CD4-positive, alpha-beta T cell (primary cell): ENCODE measurements at regions of chr10 and their contacts with region 1.

Region 1: DNA sequence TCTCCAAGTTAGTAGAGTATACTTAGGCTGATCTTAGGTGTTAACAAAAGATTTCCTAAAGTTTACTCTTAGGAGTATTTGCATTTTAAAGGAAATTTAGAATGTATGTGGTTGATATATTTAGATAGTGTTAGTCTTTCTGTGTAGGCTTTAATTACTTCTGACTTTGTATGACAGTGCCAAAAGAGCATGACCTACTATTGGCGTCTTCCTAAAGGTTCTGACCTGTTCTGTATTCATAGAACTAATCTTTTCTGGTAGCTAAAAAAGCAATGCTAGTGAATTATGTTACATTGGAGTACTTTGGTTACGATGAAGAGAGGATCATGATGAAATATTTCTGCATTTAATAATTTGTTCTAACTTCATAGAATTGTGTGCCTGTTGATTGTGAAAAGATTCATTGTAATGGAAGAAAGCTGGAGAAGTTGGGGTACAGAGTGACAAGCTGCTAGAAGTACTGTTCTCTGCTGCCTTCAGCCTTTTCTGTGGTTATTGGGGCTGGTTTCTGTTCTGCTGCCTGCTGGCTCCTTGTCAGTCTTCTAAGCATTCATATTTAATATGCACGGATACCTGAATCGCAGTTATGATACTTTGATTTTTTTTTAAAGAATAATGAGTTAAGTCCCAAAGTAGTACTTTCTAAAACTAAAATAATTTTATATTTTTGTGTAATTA is 13.2 kb downstream of the WAC start:
- DNase-seq: no peak
- ATAC-seq: peak; percentile 43
- H3K4me3 ChIP-seq: no peak overlapping the region
- H3K4me3 Mint-ChIP-seq: peak overlapping the region; percentile 16
- H3K27ac ChIP-seq: no peak overlapping the region
- H3K27ac Mint-ChIP-seq: peak overlapping the region; percentile 4
- H3K4me1 ChIP-seq: peaks cover 39% of the 10 kb centered on the region
- H3K4me1 Mint-ChIP-seq: peaks cover 82% of the 10 kb centered on the region
- H3K27me3 ChIP-seq: no peaks in the 10 kb centered on the region
- H3K27me3 Mint-ChIP-seq: no peaks in the 10 kb centered on the region
- CTCF ChIP-seq: no peak

Region 2: DNA sequence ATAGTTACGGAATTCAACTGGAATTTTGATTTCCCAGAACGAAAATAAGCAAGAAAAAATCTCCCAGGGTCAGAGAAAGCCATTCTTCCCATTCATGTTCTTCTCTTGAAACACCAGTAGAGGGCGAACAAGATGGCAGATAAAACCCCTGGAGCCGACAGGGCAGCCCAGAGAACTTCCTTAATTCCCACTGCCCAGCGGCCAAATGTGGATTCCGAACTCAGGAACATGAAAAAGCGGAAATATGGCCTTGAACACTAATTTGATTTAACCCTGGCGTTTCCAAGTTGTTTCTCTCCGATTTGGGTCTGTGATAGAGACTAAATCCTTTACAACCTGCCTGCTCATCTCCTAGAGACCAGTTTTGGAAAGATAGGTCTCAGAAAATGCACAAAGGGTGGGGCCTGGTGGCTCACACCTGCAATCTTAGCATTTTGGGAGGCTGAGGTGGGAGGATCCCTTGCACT is 113.9 kb before region 1 on chr10:
- CTCF ChIA-PET with region 1: interaction called, 3 read pairs
- POLR2A ChIA-PET with region 1: no interaction called
- intact Hi-C with region 1: loop called in 1 of 2 experiments (anchors 5 kb)
- DNase-seq: peak in 8 of 14 experiments; percentile 2 to 72 (median 16)
- ATAC-seq: peak; percentile 65
- H3K4me3 ChIP-seq: peak overlapping the region; percentile 15
- H3K4me3 Mint-ChIP-seq: peak overlapping the region; percentile 44
- H3K27ac ChIP-seq: no peak overlapping the region
- H3K27ac Mint-ChIP-seq: no peak overlapping the region
- H3K4me1 ChIP-seq: peaks cover 5% of the 10 kb centered on the region
- H3K4me1 Mint-ChIP-seq: peaks cover 8% of the 10 kb centered on the region
- H3K27me3 ChIP-seq: no peaks in the 10 kb centered on the region
- H3K27me3 Mint-ChIP-seq: peaks cover 4% of the 10 kb centered on the region
- CTCF ChIP-seq: peak; percentile 85

Region 3: DNA sequence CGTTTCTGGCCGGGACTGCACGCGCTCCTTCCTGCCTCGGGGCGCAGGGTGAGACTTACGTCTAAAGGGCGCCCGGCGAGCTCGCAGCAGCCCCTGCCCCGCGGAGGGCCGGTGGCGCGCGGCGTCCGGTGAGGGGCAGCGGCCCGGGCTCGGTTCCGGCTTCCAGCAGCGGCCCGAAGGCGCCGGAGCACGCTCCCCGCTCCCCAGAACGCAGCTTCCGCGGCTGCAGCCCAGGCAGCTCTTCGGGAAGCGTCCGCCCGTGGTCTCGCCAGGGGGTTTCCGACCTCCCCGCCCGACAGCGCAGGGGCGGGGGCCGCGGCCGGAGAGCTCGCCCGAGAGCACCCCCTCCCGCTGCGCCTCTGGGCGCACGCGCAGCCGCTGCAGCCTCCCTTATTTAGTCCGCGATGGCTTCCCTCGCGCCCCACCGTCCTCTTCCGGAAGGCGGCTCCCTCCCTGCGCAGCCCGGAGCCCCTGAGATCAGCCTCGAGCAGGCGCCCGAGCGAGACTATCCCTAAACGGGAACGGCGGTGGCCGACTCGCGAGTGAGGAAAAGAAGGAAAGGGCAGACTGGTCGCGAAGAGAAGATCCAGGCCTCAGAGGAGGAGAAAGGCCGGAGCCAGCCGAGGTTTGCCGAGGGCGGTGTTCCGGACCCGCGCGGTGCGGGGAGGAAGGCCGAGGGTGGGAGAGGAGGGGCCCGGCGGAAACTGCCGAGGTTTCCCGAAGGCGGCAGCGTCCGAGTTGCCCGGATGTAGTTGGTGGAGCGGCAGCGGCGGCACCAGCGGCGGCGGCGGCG is 13.5 kb before region 1 on chr10 and contains the start of gene WAC:
- CTCF ChIA-PET with region 1: no interaction called
- POLR2A ChIA-PET with region 1: interaction called, 45 read pairs
- intact Hi-C with region 1: loop called in 1 of 2 experiments (anchors 2 kb)
- DNase-seq: peak; percentile 93 to 98 (median 97)
- ATAC-seq: peak; percentile 81
- H3K4me3 ChIP-seq: peak within 1 kb of the TSS; percentile 98
- H3K4me3 Mint-ChIP-seq: peak within 1 kb of the TSS; percentile 100
- H3K27ac ChIP-seq: peak within 1 kb of the TSS; percentile 99
- H3K27ac Mint-ChIP-seq: peak within 1 kb of the TSS; percentile 98
- H3K4me1 ChIP-seq: peaks cover 22% of the 10 kb centered on the region
- H3K4me1 Mint-ChIP-seq: peaks cover 73% of the 10 kb centered on the region
- H3K27me3 ChIP-seq: no peaks in the 10 kb centered on the region
- H3K27me3 Mint-ChIP-seq: no peaks in the 10 kb centered on the region
- CTCF ChIP-seq: peak; percentile 30
- total RNA-seq, gene WAC: 169 to 177 TPM

Region 4: DNA sequence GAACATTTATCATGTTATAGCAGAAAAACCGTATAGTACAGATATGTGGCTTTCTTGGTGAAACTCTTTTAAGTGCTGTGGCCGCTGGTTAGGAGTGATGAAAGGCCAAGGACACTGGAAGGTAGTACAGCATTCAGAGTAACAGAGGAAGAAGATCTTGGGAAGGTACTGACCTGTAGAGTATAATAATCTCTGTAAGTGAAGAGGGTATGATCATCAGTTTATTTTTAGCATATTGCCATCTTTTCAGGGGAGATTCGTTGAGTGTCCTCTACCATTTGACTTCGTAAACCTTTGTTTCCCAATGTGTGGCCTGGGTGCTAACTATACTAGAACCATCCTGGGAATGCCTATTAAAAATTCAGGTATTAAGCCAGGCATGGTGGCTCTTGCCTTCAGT is 31.4 kb after region 1 on chr10:
- CTCF ChIA-PET with region 1: no interaction called
- POLR2A ChIA-PET with region 1: no interaction called
- intact Hi-C with region 1: loop called in 1 of 2 experiments (anchors 5 kb)
- DNase-seq: no peak
- ATAC-seq: no peak
- H3K4me3 ChIP-seq: no peak overlapping the region
- H3K4me3 Mint-ChIP-seq: peak overlapping the region; percentile 13
- H3K27ac ChIP-seq: no peak overlapping the region
- H3K27ac Mint-ChIP-seq: peak overlapping the region; percentile 41
- H3K4me1 ChIP-seq: peaks cover 19% of the 10 kb centered on the region
- H3K4me1 Mint-ChIP-seq: peaks cover 90% of the 10 kb centered on the region
- H3K27me3 ChIP-seq: no peaks in the 10 kb centered on the region
- H3K27me3 Mint-ChIP-seq: no peaks in the 10 kb centered on the region
- CTCF ChIP-seq: no peak

Region 5: DNA sequence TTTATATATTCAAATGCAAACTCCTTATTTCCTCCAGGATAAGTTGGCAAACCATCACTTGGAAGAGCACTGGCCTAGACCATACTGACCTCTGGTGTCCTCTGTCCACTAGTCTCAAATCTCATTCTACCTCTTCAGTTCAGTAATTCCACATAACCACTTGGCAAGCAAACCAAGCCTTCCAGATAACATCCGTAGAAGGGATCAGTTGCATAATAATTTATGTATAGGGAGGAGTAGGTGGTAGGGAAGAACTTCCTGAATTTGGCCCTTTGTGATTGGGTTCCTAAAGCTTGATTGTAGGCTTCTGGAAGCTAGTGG is 41.8 kb after region 1 on chr10:
- CTCF ChIA-PET with region 1: interaction called, 10 read pairs
- POLR2A ChIA-PET with region 1: no interaction called
- intact Hi-C with region 1: loop called in 1 of 2 experiments (anchors 5 kb)
- DNase-seq: no peak
- ATAC-seq: no peak
- H3K4me3 ChIP-seq: no peak overlapping the region
- H3K4me3 Mint-ChIP-seq: no peak overlapping the region
- H3K27ac ChIP-seq: no peak overlapping the region
- H3K27ac Mint-ChIP-seq: peak overlapping the region; percentile 68
- H3K4me1 ChIP-seq: peaks cover 3% of the 10 kb centered on the region
- H3K4me1 Mint-ChIP-seq: peaks cover 72% of the 10 kb centered on the region
- H3K27me3 ChIP-seq: no peaks in the 10 kb centered on the region
- H3K27me3 Mint-ChIP-seq: no peaks in the 10 kb centered on the region
- CTCF ChIP-seq: no peak

Region 6: DNA sequence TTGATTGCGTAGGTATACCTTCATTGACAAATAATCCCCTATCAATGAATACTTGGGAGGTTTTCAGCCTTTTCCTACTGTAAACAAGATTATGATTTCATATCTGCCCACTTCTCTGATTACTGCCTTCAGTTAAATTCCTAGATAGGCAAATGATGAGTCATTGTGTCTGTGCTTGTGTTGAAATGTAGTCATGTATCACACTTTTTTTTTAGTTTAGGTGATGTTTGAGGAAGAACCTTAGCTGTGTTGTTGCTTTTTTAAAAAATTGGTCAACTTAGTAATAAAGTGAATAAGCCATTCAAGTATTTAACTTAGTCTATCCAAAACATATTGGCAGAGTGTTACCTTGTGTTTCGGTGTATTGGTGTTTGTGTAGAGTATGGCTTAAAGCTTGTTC is 46.8 kb after region 1 on chr10:
- CTCF ChIA-PET with region 1: no interaction called
- POLR2A ChIA-PET with region 1: no interaction called
- intact Hi-C with region 1: loop called in 1 of 2 experiments (anchors 5 kb)
- DNase-seq: peak in 2 of 14 experiments; percentile 24 to 30
- ATAC-seq: no peak
- H3K4me3 ChIP-seq: no peak overlapping the region
- H3K4me3 Mint-ChIP-seq: peak overlapping the region; percentile 3
- H3K27ac ChIP-seq: no peak overlapping the region
- H3K27ac Mint-ChIP-seq: peak overlapping the region; percentile 12
- H3K4me1 ChIP-seq: peaks cover 13% of the 10 kb centered on the region
- H3K4me1 Mint-ChIP-seq: peaks cover 69% of the 10 kb centered on the region
- H3K27me3 ChIP-seq: no peaks in the 10 kb centered on the region
- H3K27me3 Mint-ChIP-seq: no peaks in the 10 kb centered on the region
- CTCF ChIP-seq: no peak

Region 7: DNA sequence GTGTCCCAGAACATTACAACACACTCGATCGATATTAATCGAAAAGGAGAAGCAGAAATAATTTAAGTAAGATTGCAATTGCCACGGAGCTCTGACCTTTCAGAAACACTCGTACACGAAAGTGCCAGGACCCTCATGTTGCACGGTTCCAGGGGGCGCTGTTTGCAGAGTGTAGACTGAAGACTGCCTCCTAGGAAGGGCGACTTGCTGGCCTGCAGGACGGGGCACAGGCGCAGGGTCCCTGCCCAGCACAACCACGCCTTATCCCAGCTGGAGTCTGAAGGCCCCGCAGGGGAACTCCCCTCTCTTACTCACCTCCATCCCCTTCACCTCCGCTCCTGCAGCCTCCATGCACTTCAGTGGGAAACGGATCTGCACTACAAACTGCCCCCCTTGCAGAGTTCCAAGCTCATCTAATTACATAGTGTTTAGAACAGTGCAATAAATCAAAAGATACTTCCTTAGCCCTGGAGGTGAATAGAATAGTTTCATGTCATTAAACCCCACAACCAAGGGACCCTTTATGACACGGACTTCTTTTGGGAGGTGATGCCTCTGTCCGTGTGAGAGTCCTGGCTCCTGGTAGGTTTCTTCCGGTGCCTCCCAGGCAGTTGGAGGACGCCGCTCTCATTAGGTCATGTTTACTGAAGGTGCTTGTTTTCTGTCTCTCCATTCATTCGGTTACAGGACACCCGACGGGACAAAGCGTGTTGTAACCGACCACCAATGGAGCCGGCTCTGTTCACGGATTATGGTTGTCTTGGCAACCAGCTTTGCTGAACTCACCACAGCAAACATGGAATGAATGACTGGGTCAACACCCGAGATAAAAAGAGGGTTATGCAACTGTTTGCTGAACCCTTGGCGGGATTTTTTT is 393.4 kb after region 1 on chr10:
- CTCF ChIA-PET with region 1: no interaction called
- POLR2A ChIA-PET with region 1: no interaction called
- intact Hi-C with region 1: no loop called
- DNase-seq: no peak
- ATAC-seq: no peak
- H3K4me3 ChIP-seq: no peak overlapping the region
- H3K4me3 Mint-ChIP-seq: no peak overlapping the region
- H3K27ac ChIP-seq: no peak overlapping the region
- H3K27ac Mint-ChIP-seq: no peak overlapping the region
- H3K4me1 ChIP-seq: no peaks in the 10 kb centered on the region
- H3K4me1 Mint-ChIP-seq: no peaks in the 10 kb centered on the region
- H3K27me3 ChIP-seq: peaks cover 0 to 4% of the 10 kb centered on the region in 2 experiments
- H3K27me3 Mint-ChIP-seq: no peaks in the 10 kb centered on the region
- CTCF ChIP-seq: no peak